ENCODE measurements at regions of chr13 and their contacts with region 1.

Region 1: GRCh38 chr13:42215578-42216421 is 56.2 kb upstream of the AKAP11 start:
- DNase-seq: peak; percentile 10
- ATAC-seq: peak; percentile 78
- H3K4me3 ChIP-seq: no peak overlapping the region
- H3K27ac ChIP-seq: no peak overlapping the region
- H3K4me1 ChIP-seq: no peaks in the 10 kb centered on the region
- H3K27me3 ChIP-seq: no peaks in the 10 kb centered on the region
- CTCF ChIP-seq: peak; percentile 62
- EP300 ChIP-seq: no peak
- POLR2A ChIP-seq: no peak
- RAD21 ChIP-seq: no peak

Region 2: DNA sequence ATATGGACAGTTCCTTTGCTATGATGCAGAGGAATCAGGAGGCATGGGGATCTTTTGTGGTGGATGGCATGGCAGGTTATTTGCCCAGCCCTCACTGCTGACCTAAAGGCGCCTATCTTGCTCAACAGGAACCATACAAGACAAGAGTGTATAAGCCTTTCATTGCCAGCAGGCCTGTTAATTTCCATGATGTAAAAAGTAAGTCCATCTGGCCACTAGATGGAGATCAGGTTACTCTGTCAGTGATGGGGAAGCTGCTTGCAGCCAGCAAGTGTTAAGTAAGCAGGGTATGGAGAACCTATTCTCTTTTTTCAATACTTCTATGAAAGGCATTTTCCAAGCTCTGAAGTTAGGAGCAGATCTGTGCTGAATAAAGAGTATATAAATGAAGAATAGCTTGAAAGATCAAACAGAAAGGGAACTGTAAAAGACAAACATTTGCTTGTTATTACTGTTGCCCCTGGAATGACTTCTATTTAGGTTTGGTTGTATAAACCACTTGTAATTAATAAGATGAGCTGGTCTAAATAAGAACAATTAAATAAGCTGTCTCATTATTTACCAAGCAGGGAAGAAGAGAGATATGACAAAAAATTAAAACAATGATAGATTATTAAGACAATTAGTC is 547.6 kb before region 1 on chr13:
- CTCF ChIA-PET with region 1: no interaction called
- POLR2A ChIA-PET with region 1: no interaction called
- in situ Hi-C with region 1: no loop called
- intact Hi-C with region 1: loop called (anchors 1 kb)
- DNase-seq: peak; percentile 96
- ATAC-seq: peak; percentile 100
- H3K4me3 ChIP-seq: no peak overlapping the region
- H3K27ac ChIP-seq: peak overlapping the region; percentile 36
- H3K4me1 ChIP-seq: peaks cover 15% of the 10 kb centered on the region
- H3K27me3 ChIP-seq: no peaks in the 10 kb centered on the region
- CTCF ChIP-seq: peak; percentile 88
- EP300 ChIP-seq: peak in 1 of 2 experiments; percentile 56; a peak in 2 of 4 replicates
- POLR2A ChIP-seq: no peak
- RAD21 ChIP-seq: peak; percentile 71

Region 3: GRCh38 chr13:42174344-42175162 is 41.2 kb before region 1 on chr13:
- CTCF ChIA-PET with region 1: no interaction called
- POLR2A ChIA-PET with region 1: no interaction called
- in situ Hi-C with region 1: no loop called
- intact Hi-C with region 1: no loop called
- DNase-seq: no peak
- ATAC-seq: no peak
- H3K4me3 ChIP-seq: no peak overlapping the region
- H3K27ac ChIP-seq: no peak overlapping the region
- H3K4me1 ChIP-seq: no peaks in the 10 kb centered on the region
- H3K27me3 ChIP-seq: no peaks in the 10 kb centered on the region
- CTCF ChIP-seq: no peak
- EP300 ChIP-seq: no peak
- POLR2A ChIP-seq: no peak
- RAD21 ChIP-seq: no peak

Region 4: GRCh38 chr13:42363941-42364612 is 148.3 kb after region 1 on chr13:
- CTCF ChIA-PET with region 1: no interaction called
- POLR2A ChIA-PET with region 1: no interaction called
- in situ Hi-C with region 1: no loop called
- intact Hi-C with region 1: no loop called
- DNase-seq: no peak
- ATAC-seq: peak; percentile 97
- H3K4me3 ChIP-seq: no peak overlapping the region
- H3K27ac ChIP-seq: no peak overlapping the region
- H3K4me1 ChIP-seq: peaks cover 10% of the 10 kb centered on the region
- H3K27me3 ChIP-seq: no peaks in the 10 kb centered on the region
- CTCF ChIP-seq: peak; percentile 30; the same call in 1 of the 2 replicates
- EP300 ChIP-seq: no peak
- POLR2A ChIP-seq: no peak
- RAD21 ChIP-seq: no peak